Common myeloid progenitor, CD34-positive (primary cell): ENCODE measurements at regions of chr10 and their contacts with region 1.

Region 1: GRCh38 chr10:132354356-132355094 is 22.5 kb downstream of the LRRC27 start:
- DNase-seq: no peak
- H3K4me3 ChIP-seq: no peak overlapping the region
- H3K27ac ChIP-seq: no peak overlapping the region
- H3K4me1 ChIP-seq: peaks cover 0 to 2% (median 0%) of the 10 kb centered on the region in 4 experiments
- H3K27me3 ChIP-seq: no peaks in the 10 kb centered on the region

Region 2: GRCh38 chr10:132223156-132223590 is 131.4 kb before region 1 on chr10:
- CTCF ChIA-PET with region 1: interaction called, 11 read pairs
- POLR2A ChIA-PET with region 1: no interaction called
- DNase-seq: peak; percentile 74 to 85 (median 83)
- H3K4me3 ChIP-seq: no peak overlapping the region
- H3K27ac ChIP-seq: no peak overlapping the region
- H3K4me1 ChIP-seq: peaks cover 0 to 5% (median 2%) of the 10 kb centered on the region in 4 experiments
- H3K27me3 ChIP-seq: no peaks in the 10 kb centered on the region

Region 3: GRCh38 chr10:132307823-132308587 is 46.5 kb before region 1 on chr10 and contains the start of gene STK32C:
- CTCF ChIA-PET with region 1: no interaction called
- POLR2A ChIA-PET with region 1: no interaction called
- DNase-seq: peak; percentile 86 to 91 (median 90)
- H3K4me3 ChIP-seq: peak within 1 kb of the TSS; percentile 58 to 85 (median 69)
- H3K27ac ChIP-seq: no peak within 1 kb of the TSS
- H3K4me1 ChIP-seq: peaks cover 0 to 21% (median 20%) of the 10 kb centered on the region in 4 experiments
- H3K27me3 ChIP-seq: peaks cover 0 to 16% (median 0%) of the 10 kb centered on the region in 5 experiments

Region 4: DNA sequence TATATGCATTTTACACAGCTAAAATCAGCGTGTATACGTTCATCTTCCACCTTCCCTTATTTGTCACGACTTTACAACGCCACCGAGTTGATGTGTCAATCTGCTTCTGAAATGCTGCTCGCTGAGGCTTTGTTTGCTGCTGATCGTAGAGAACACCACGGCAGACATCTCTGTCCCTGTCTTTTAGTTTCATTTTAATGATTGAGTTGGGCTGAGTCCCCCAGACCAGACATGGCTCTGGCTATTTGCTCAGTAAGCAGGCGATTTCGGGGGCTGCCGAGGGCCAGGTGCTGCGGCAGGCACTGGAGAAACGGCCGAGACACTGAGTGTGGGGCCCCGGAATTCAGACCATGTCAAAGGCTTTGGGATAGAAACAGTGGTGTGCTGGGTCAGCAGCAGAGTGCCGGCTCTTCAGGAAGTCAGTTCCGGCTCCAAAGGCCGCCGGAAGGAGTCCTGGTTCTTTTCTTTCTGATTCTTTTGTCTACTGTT is 17.6 kb before region 1 on chr10:
- CTCF ChIA-PET with region 1: interaction called, 22 read pairs
- POLR2A ChIA-PET with region 1: no interaction called
- DNase-seq: peak in 2 of 3 donors; percentile 48 to 64
- H3K4me3 ChIP-seq: peak overlapping the region; percentile 52 to 78 (median 69)
- H3K27ac ChIP-seq: peak overlapping the region; percentile 51 to 84
- H3K4me1 ChIP-seq: peaks cover 12 to 49% (median 35%) of the 10 kb centered on the region in 4 experiments
- H3K27me3 ChIP-seq: no peaks in the 10 kb centered on the region